PC-3 (cell line): ENCODE measurements at regions of chr14 and their contacts with region 1.

Region 1: DNA sequence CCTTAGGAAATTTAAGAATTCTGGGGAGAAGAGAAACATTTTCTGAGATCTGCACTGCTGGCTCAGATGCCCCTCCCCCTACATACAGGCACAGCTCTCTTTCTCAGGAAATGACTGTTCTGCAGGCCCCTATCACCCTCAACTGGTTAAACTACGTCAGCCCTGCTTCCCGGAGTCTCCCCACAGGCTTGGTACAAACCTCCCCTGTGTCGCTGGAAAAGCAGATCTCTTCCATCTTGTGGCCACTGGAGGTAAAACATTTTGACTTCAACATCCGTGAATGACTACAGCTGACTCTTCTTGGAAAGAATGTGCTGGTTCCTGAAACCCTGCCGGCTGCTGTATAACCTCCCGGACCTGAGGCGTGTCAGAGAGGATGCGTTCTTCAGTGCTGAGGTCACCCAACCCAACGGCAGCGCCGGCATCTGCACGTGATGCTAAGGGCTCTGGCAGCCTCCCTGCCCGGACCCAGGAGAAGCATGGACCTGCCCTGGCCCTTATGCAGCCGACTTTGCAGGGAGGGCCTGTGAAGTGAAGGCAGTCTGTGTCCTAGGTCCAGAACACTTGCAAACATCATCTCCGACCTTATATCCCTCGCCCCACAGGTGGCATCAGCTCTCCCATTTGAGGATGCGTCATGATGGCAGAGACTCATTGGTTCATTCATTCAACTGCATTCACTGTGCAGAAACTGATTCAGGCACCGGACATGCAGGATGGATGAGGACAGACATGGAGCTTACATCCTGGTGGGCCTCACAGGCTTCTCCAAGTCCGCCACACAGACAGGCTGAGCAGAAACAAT is 129.3 kb downstream of the GCH1 start:
- DNase-seq: peak; percentile 100
- ATAC-seq: peak; percentile 90
- H3K4me3 ChIP-seq: peak overlapping the region; percentile 44
- H3K27ac ChIP-seq: peak overlapping the region; percentile 85
- H3K4me1 ChIP-seq: peaks cover 30% of the 10 kb centered on the region
- H3K27me3 ChIP-seq: no peaks in the 10 kb centered on the region
- CTCF ChIP-seq: peak; percentile 96

Region 2: GRCh38 chr14:54440873-54441868 is 332.2 kb before region 1 on chr14 and contains the start of gene CNIH1:
- CTCF ChIA-PET with region 1: no interaction called
- POLR2A ChIA-PET with region 1: no interaction called
- intact Hi-C with region 1: loop called (anchors 2 kb)
- DNase-seq: peak; percentile 99
- ATAC-seq: peak; percentile 95
- H3K4me3 ChIP-seq: peak within 1 kb of the TSS; percentile 74
- H3K27ac ChIP-seq: peak within 1 kb of the TSS; percentile 74
- H3K4me1 ChIP-seq: peaks cover 52% of the 10 kb centered on the region
- H3K27me3 ChIP-seq: no peaks in the 10 kb centered on the region
- CTCF ChIP-seq: peak; percentile 99
- total RNA-seq, gene CNIH1: 139 and 194 TPM in 2 replicates

Region 3: GRCh38 chr14:54642801-54643697 is 130.3 kb before region 1 on chr14:
- CTCF ChIA-PET with region 1: interaction called, 3 read pairs
- POLR2A ChIA-PET with region 1: no interaction called
- intact Hi-C with region 1: loop called (anchors 5 kb)
- DNase-seq: peak; percentile 46
- ATAC-seq: no peak
- H3K4me3 ChIP-seq: no peak overlapping the region
- H3K27ac ChIP-seq: no peak overlapping the region
- H3K4me1 ChIP-seq: peaks cover 20% of the 10 kb centered on the region
- H3K27me3 ChIP-seq: no peaks in the 10 kb centered on the region
- CTCF ChIP-seq: peak; percentile 63

Region 4: DNA sequence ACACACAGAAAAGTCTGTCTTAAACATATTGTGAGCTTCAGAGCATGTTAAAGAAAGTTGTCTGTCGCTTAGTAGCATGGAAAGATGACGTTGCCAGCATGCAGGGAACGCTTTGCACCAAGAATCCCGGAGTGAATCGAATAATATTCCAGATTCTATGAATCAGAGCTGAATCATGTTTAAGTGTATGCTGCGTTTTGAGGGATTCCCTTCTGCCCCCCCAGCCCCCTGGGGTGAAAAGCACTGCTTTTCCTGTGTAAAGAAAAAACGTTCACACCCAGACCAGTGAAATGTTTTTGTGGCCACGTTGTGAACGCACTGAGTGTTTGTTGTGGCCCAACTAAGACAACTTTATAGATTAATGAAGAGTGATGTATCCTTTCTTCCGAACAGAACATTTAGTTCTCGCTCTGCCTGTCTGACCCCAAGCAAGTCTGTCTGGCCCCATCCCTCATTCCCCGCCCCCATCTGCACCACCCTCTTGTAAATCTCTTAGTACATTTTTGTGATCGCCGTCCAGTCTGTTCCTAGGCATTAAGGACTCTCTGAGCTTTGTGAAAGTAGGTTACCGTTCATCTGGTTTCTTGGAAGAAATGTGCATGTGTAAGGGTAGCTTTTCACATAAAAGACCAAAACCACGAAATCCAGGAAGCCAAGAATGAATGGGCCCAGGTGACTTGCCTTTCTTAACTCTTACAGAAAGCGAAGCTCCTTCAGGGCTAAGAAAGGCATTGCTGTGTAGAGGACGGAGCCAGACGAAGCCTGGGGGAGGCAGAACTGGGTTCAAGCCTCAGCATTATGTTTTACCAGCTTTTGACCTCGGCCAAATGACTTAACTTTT is 103.4 kb before region 1 on chr14:
- CTCF ChIA-PET with region 1: interaction called, 14 read pairs
- POLR2A ChIA-PET with region 1: interaction called, 3 read pairs
- intact Hi-C with region 1: loop called (anchors 5 kb)
- DNase-seq: peak; percentile 99
- ATAC-seq: peak; percentile 77
- H3K4me3 ChIP-seq: peak overlapping the region; percentile 34
- H3K27ac ChIP-seq: peak overlapping the region; percentile 81
- H3K4me1 ChIP-seq: peaks cover 56% of the 10 kb centered on the region
- H3K27me3 ChIP-seq: no peaks in the 10 kb centered on the region
- CTCF ChIP-seq: no peak

Region 5: DNA sequence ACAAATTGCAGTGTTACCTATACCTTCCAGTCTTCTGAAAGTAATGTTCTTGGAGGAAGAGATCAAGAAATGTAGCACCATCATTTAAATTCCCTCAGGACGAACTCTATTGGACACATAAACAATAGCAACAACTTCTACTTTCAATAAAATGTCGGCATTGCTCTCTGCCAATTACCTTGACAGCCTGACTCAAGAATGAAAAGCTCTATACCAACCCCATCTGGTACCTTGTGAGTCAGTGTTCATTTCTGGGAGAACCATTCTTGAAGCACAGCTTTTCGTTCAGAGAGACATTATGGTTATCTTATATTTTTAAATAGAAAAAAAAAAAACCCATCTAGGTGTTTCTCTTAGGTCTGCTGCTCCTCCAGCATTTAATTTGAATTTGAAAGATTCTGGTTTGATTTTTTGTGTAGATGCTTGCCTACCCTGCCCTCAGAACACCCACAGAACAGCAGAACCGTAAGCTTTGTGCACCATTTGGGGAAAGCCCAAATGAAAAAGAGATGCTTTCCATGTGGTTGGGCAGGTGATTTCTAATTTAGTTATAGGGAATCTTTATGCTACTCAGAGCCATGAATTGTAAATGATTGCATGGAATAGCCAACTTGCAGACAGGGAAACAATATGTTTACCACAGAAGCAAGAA is 50.5 kb before region 1 on chr14:
- CTCF ChIA-PET with region 1: interaction called, 8 read pairs
- POLR2A ChIA-PET with region 1: interaction called, 5 read pairs
- intact Hi-C with region 1: loop called (anchors 5 kb)
- DNase-seq: peak; percentile 79
- ATAC-seq: peak; percentile 85
- H3K4me3 ChIP-seq: no peak overlapping the region
- H3K27ac ChIP-seq: no peak overlapping the region
- H3K4me1 ChIP-seq: peaks cover 4% of the 10 kb centered on the region; the same call in 1 of the 2 replicates
- H3K27me3 ChIP-seq: no peaks in the 10 kb centered on the region
- CTCF ChIP-seq: peak; percentile 85

Region 6: DNA sequence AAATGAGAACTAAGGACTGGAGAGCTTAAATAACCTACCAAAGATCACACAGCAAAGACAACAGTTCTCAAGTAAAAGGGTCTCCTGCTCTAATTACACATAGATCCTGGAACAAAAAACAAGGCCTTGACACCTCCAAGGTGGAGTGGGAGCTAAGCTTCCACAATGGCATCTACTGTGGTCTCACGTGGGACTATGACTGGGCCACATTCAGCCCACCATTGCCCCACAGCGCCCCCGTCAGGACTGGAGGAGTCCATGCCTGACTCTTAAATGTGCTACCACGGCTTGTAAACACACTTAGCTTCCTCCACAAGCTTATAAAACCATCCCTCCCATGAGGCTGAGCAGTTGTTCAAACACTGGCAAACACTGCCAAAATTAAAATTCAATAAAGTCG is 40.7 kb after region 1 on chr14:
- CTCF ChIA-PET with region 1: no interaction called
- POLR2A ChIA-PET with region 1: no interaction called
- intact Hi-C with region 1: no loop called
- DNase-seq: peak; percentile 53
- ATAC-seq: no peak
- H3K4me3 ChIP-seq: no peak overlapping the region
- H3K27ac ChIP-seq: no peak overlapping the region
- H3K4me1 ChIP-seq: peaks cover 8% of the 10 kb centered on the region; the same call in 1 of the 2 replicates
- H3K27me3 ChIP-seq: no peaks in the 10 kb centered on the region
- CTCF ChIP-seq: peak; percentile 93

Region 7: GRCh38 chr14:54857830-54858269 is 84.5 kb after region 1 on chr14:
- CTCF ChIA-PET with region 1: no interaction called
- POLR2A ChIA-PET with region 1: no interaction called
- intact Hi-C with region 1: no loop called
- DNase-seq: no peak
- ATAC-seq: no peak
- H3K4me3 ChIP-seq: no peak overlapping the region
- H3K27ac ChIP-seq: no peak overlapping the region
- H3K4me1 ChIP-seq: no peaks in the 10 kb centered on the region
- H3K27me3 ChIP-seq: no peaks in the 10 kb centered on the region
- CTCF ChIP-seq: no peak

Region 8: GRCh38 chr14:55430024-55430690 is 656.8 kb after region 1 on chr14:
- CTCF ChIA-PET with region 1: no interaction called
- POLR2A ChIA-PET with region 1: no interaction called
- intact Hi-C with region 1: loop called (anchors 5 kb)
- DNase-seq: peak; percentile 97
- ATAC-seq: peak; percentile 58
- H3K4me3 ChIP-seq: no peak overlapping the region
- H3K27ac ChIP-seq: peak overlapping the region; percentile 13
- H3K4me1 ChIP-seq: peaks cover 51% of the 10 kb centered on the region
- H3K27me3 ChIP-seq: no peaks in the 10 kb centered on the region
- CTCF ChIP-seq: peak; percentile 89